Calu3 (cell line): ENCODE measurements at regions of chr17 and their contacts with region 1.

Region 1: DNA sequence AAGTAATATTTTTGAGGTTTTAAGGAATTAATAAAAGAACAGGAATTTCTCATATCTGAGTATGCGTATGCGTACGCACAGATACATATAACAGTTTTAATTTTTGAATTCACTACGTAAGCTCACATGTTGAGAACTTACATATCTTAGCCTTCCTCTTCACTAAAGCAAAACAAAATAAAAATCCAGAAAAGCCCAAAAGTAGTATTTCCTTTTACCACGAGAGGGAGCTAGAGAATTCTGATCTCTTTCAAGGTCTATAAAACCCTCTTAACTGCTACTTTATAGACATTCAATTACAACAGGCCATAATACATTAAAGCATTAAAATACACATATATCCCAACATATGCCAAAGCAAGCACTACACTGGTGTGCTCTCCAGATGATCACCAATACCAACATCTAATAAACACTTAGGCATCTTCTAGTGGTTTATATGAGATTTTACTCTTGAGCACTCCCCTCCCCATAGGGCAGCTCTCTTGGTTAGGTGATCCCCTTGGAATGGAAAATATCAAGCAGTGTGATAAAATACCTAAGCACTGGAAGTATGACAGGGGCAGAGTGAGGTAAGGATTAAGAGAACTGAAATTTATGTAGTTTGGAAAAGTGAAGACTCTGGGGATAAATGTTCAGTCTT is 94.0 kb downstream of the SKAP1 start:
- DNase-seq: peak; percentile 20
- H3K4me3 Mint-ChIP-seq: no peak overlapping the region
- H3K27ac Mint-ChIP-seq: no peak overlapping the region
- H3K4me1 Mint-ChIP-seq: no peaks in the 10 kb centered on the region
- H3K27me3 Mint-ChIP-seq: no peaks in the 10 kb centered on the region
- CTCF ChIP-seq: peak; percentile 50

Region 2: DNA sequence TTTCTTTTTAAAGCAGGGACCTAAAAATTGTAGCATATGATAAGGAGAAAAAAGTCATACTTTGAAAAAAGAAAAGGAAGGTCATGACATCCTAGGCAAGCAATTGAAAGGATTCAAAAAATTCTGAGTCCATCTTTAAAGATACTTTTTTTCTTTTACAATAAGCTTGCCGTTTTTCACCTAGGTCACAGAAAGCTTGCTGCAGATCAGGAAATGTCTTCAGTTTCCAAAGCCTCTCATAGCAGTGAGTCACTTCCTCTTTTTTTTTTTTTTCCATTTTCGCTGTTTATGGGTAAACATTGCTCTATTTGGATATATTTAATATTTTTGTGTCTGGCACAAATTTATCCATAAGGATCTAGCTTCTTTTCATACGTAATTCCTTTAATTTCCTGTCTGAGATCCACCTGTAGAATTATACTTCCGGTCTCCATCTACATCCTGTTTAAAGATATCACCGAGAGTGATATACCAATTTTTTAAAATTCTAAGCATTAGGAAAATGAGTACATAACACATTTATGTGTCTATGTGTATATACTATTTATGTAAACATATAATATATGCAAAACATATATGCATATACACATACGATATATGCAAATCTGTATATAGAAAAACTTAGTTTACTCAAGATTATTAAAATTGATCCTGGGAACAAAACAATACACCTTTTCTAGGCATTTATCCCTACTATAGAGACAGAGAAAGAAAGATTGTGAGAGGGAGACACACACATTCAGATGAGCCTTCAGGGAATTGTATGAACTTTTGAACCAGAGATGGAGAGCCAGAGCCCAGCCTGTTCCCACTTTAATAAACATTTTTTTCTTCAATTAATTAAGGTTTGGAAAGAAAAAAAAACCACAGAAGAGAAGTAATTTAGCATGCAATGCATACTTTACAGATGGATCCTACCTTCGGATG is 40.4 kb before region 1 on chr17:
- CTCF ChIA-PET with region 1: interaction called, 9 read pairs
- intact Hi-C with region 1: loop called (anchors 5 kb)
- DNase-seq: no peak
- H3K4me3 Mint-ChIP-seq: peak overlapping the region; percentile 46
- H3K27ac Mint-ChIP-seq: peak overlapping the region; percentile 94
- H3K4me1 Mint-ChIP-seq: peaks cover 75% of the 10 kb centered on the region
- H3K27me3 Mint-ChIP-seq: no peaks in the 10 kb centered on the region
- CTCF ChIP-seq: no peak

Region 3: GRCh38 chr17:48307814-48308411 is 28.1 kb before region 1 on chr17:
- CTCF ChIA-PET with region 1: interaction called, 10 read pairs
- intact Hi-C with region 1: no loop called
- DNase-seq: peak; percentile 79
- H3K4me3 Mint-ChIP-seq: no peak overlapping the region
- H3K27ac Mint-ChIP-seq: no peak overlapping the region
- H3K4me1 Mint-ChIP-seq: peaks cover 30% of the 10 kb centered on the region
- H3K27me3 Mint-ChIP-seq: no peaks in the 10 kb centered on the region
- CTCF ChIP-seq: peak; percentile 95

Region 4: GRCh38 chr17:48322060-48322459 is 13.9 kb before region 1 on chr17:
- CTCF ChIA-PET with region 1: interaction called, 10 read pairs
- intact Hi-C with region 1: no loop called
- DNase-seq: no peak
- H3K4me3 Mint-ChIP-seq: no peak overlapping the region
- H3K27ac Mint-ChIP-seq: no peak overlapping the region
- H3K4me1 Mint-ChIP-seq: no peaks in the 10 kb centered on the region
- H3K27me3 Mint-ChIP-seq: no peaks in the 10 kb centered on the region
- CTCF ChIP-seq: no peak

Region 5: DNA sequence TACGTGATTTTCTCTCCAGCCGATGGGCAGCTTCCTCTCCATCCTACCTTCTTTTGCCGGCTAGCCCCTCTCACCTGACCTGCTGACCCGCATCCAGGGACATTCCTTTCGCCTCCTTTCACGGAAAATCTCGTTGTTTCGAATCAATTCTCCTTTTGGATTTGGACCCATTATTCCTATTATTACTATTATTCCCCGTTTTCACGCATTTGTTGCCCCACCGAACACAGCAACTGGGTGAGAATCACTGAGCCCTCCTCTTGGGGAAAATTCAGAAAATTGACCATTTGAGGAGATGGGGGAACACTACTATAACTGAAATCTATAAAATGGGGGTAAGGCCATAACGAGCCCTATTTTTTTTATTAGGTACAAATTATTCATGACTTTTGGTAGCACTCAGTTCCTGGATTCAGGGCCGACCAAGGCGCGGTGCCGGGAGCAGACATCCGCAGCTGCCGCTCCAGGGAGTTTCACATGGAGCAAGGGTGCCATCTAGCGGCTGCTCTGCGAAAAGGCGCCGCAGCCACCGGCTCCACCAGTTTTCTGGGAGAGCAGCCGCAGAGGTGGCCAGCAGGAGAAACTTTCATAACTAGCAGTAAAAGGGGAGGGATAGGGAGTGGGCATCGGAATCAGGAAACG is 282.4 kb after region 1 on chr17:
- CTCF ChIA-PET with region 1: interaction called, 10 read pairs
- intact Hi-C with region 1: loop called (anchors 1 kb)
- DNase-seq: peak; percentile 98
- H3K4me3 Mint-ChIP-seq: peak overlapping the region; percentile 88
- H3K27ac Mint-ChIP-seq: peak overlapping the region; percentile 74
- H3K4me1 Mint-ChIP-seq: peaks cover 71% of the 10 kb centered on the region
- H3K27me3 Mint-ChIP-seq: peaks cover 88% of the 10 kb centered on the region
- CTCF ChIP-seq: peak; percentile 100